ENCODE measurements at regions of chr3 and their contacts with region 1.

Region 1: DNA sequence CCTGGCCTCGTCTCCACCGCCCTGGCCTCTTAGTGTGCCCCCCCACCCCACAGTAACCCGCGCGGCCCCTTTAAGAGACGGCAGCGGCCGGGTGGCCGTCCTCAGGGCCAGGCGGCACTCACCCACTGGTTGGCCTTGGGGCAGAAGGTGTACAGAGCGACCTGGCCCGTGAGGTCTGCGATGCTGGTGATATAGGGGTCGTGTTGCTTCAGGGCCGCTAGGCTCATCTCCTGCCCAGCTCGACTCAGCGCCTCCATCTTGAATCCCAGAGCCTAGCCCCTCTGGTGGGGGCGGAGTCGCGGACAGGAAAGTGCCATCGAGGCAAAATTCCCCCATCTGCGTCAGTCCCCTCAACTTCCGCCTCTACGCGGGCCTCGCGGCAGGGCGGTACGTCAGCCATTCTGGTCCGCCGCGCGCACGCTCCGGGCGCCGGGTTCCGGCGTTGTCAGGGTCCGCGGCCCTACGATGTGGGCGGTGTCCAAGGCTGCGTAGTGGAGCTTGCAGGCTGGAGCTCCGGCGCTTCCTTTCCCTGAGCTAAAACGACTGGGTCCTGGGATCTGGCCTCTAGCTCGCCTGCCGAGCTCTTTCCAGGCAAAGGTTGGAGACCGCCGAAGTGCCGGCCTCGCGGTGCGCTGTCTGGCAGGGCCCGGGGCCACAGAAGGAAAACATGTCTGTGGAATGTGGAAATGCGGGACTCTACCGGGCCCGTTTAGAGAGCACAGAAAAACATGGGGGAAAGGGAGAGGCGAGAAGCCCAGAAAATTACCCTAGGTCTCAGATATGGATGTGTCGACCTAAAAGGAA is at the start of gene DCP1A:
- DNase-seq: peak; percentile 98
- H3K4me3 ChIP-seq: peak within 1 kb of the TSS; percentile 88 to 96 (median 90)
- H3K27ac ChIP-seq: peak within 1 kb of the TSS; percentile 94 to 96 (median 94)
- H3K4me1 ChIP-seq: peaks cover 18 to 47% (median 41%) of the 10 kb centered on the region in 4 donors
- H3K27me3 ChIP-seq: no peaks in the 10 kb centered on the region
- CTCF ChIP-seq: peak in 1 of 3 experiments; percentile 21
- EP300 ChIP-seq: no peak
- POLR2A ChIP-seq: peak; percentile 55
- total RNA-seq, gene DCP1A: 17.0 to 26.4 (median 20.5) TPM

Region 2: DNA sequence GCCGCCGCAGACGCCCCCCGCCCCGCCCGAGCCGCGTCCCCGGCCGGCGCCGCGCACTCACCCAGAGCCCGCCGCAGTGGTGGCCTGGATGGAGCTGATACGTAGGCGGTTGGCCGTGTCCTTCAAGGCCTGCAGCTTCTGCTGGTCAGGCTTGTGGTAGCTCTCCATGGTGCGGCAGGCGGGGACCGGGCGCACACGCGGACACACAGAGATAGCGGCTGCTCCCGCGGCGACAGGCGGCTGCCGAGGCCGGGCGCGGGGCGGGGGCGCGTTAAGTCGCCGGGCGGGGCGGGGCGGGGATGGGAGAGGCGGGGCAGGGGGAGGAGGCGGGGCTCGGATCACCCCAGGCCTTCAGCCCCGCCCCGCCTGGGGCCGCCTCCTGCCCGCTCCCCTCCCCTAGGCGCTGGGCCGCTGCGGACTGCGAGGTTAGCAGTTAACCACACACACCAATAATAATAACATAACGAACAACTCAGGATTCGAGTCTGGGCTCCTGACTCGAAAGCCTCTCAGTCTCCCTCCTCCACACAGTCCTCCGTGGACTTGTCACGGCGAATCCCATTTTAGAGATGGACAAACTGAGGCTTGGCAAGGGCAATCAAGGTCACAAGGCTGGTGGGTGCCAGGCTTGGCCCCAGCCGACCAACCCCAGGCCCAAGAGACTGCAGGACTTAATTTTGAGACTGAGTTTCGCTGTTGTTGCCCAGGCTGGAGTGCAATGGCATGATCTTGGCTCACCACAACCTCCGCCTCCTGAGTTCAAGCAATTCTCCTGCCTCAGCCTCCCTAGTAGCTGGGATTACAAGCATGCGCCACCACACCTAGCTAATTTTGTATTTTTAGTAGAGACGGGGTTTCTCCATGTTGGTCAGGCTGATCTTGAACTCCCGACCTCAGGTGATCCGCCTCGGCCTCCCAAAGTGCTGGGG is 91.4 kb before region 1 on chr3 and contains the start of gene TKT:
- intact Hi-C with region 1: loop called (anchors 5 kb)
- DNase-seq: peak; percentile 95
- H3K4me3 ChIP-seq: peak within 1 kb of the TSS; percentile 82 to 99 (median 98)
- H3K27ac ChIP-seq: peak within 1 kb of the TSS; percentile 89 to 95 (median 92)
- H3K4me1 ChIP-seq: peaks cover 45 to 51% (median 47%) of the 10 kb centered on the region in 4 donors
- H3K27me3 ChIP-seq: no peaks in the 10 kb centered on the region
- CTCF ChIP-seq: no peak
- EP300 ChIP-seq: no peak
- POLR2A ChIP-seq: peak; percentile 60
- total RNA-seq, gene TKT: 295 to 524 (median 378) TPM

Region 3: DNA sequence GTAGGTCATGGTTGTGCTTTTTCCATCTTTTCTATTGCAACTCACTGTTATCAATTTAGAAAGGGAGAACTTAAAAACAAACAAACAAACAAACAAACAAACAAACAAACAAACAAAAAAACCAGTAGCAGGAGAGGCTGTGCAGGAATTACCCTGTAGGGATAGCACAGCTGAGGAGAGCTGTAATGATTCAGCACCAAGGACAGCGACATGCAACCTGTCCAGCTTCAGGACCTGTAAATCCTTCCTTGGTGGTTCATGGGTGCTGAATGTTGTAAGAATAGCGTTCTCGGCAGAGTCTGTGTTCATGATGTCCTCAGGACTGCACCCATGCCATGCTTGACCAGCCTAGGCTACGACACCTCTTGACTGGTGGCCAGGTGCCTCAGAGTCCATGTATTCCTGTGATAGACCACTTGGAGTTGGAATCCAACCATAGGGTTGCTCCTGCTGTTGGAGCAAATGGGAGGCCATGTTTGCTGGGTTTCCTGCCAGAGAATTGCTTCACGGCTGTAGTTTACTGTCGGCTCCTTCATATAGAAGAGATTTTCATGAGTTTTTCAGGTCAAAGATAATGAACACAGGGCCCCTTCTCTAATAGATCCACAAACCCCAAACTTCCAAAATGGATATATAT is 840.8 kb after region 1 on chr3:
- intact Hi-C with region 1: no loop called
- DNase-seq: no peak
- H3K4me3 ChIP-seq: no peak overlapping the region
- H3K27ac ChIP-seq: no peak overlapping the region
- H3K4me1 ChIP-seq: no peaks in the 10 kb centered on the region
- H3K27me3 ChIP-seq: no peaks in the 10 kb centered on the region
- CTCF ChIP-seq: no peak
- EP300 ChIP-seq: no peak
- POLR2A ChIP-seq: no peak